ENCODE measurements at regions of chr1 and their contacts with region 1.

Region 1: DNA sequence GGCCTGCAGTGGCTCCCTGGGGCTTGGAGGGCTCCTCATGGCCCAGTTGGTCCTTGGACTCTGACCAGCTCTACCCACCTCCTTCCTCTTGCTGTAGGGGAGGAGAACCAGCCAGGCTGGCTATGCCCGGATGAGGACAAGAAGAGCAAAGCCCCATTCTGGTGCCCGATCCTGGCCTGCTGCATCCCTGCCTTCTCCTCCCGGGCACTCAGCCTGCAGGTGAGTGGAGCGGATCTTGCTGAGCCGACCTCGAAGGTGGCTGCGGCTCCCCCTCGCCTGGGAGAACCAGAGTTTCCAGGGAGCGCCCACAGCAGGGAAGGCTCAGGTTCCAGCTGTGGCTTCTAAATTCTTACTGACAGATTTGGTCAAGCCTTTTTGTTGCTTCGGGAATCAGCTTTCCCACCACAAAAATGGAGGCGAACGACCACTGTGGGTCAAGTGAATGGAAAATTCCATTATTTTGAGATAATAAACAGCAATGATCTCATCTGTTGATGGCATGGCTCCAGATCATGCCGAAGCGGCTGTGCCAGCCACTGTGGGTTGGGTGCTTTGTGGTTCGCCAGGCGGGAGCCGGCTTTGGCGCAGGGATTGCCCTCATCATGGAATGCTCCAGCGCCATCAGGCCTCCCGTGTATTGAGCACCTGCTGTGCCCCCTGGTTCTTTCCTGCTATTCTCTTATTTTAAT is 106.5 kb upstream of the ACTL8 start:
- DNase-seq: no peak
- H3K4me3 ChIP-seq: no peak overlapping the region
- H3K4me3 Mint-ChIP-seq: no peak overlapping the region
- H3K27ac ChIP-seq: no peak overlapping the region
- H3K27ac Mint-ChIP-seq: no peak overlapping the region
- H3K4me1 ChIP-seq: no peaks in the 10 kb centered on the region
- H3K4me1 Mint-ChIP-seq: peaks cover 0 to 2% (median 0%) of the 10 kb centered on the region in 4 donors
- H3K27me3 ChIP-seq: no peaks in the 10 kb centered on the region
- H3K27me3 Mint-ChIP-seq: peaks cover 4% of the 10 kb centered on the region in 2 donors

Region 2: GRCh38 chr1:17661546-17662157 is 13.1 kb after region 1 on chr1:
- CTCF ChIA-PET with region 1: interaction called, 28 read pairs
- POLR2A ChIA-PET with region 1: no interaction called
- intact Hi-C with region 1: no loop called
- DNase-seq: peak in 4 of 5 donors; percentile 15 to 36 (median 26)
- H3K4me3 ChIP-seq: no peak overlapping the region
- H3K4me3 Mint-ChIP-seq: no peak overlapping the region
- H3K27ac ChIP-seq: no peak overlapping the region
- H3K27ac Mint-ChIP-seq: no peak overlapping the region
- H3K4me1 ChIP-seq: no peaks in the 10 kb centered on the region
- H3K4me1 Mint-ChIP-seq: no peaks in the 10 kb centered on the region
- H3K27me3 ChIP-seq: no peaks in the 10 kb centered on the region
- H3K27me3 Mint-ChIP-seq: peaks cover 0 to 1% of the 10 kb centered on the region in 2 donors

Region 3: DNA sequence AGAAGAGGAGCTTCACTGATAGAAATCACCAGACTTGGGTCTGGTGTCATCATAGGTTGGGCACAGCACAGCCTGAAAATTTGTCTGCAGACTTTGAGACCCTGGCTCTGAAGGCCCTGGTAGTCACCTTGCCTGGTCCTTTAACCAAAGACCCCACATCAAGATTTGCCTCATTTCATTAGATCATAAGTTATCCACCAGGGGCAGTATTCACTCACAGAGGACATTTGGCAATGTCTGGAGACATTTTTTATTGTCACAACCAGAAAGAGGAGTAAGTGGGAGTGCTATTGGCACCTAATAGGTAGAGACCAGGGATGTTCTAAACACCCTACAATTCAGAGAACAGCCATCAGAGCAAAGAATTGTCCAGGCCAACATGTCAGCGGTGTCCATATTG is 959.9 kb after region 1 on chr1:
- CTCF ChIA-PET with region 1: no interaction called
- POLR2A ChIA-PET with region 1: no interaction called
- intact Hi-C with region 1: no loop called
- DNase-seq: no peak
- H3K4me3 ChIP-seq: no peak overlapping the region
- H3K4me3 Mint-ChIP-seq: no peak overlapping the region
- H3K27ac ChIP-seq: no peak overlapping the region
- H3K27ac Mint-ChIP-seq: no peak overlapping the region
- H3K4me1 ChIP-seq: no peaks in the 10 kb centered on the region
- H3K4me1 Mint-ChIP-seq: no peaks in the 10 kb centered on the region
- H3K27me3 ChIP-seq: no peaks in the 10 kb centered on the region
- H3K27me3 Mint-ChIP-seq: peaks cover 7 to 13% of the 10 kb centered on the region in 2 donors

Measured in CD4-positive, alpha-beta memory T cell (primary cell).